Heart right ventricle (tissue), 16 donors: ENCODE measurements at regions of chr2 and their contacts with region 1.

Region 1: GRCh38 chr2:176454893-176455811 is 185.9 kb downstream of the MTX2 start:
- DNase-seq: peak; percentile 81 to 84
- ATAC-seq: peak in 7 of 8 donors; percentile 34 to 78 (median 55)
- H3K4me3 ChIP-seq: no peak overlapping the region
- H3K27ac ChIP-seq: peak overlapping the region in 6 of 10 donors; percentile 23 to 63 (median 45)
- H3K4me1 ChIP-seq: peaks cover 0 to 21% (median 3%) of the 10 kb centered on the region in 9 donors
- H3K27me3 ChIP-seq: peaks cover 0 to 64% (median 10%) of the 10 kb centered on the region in 7 donors
- CTCF ChIP-seq: peak; percentile 81 to 97 (median 93)

Region 2: DNA sequence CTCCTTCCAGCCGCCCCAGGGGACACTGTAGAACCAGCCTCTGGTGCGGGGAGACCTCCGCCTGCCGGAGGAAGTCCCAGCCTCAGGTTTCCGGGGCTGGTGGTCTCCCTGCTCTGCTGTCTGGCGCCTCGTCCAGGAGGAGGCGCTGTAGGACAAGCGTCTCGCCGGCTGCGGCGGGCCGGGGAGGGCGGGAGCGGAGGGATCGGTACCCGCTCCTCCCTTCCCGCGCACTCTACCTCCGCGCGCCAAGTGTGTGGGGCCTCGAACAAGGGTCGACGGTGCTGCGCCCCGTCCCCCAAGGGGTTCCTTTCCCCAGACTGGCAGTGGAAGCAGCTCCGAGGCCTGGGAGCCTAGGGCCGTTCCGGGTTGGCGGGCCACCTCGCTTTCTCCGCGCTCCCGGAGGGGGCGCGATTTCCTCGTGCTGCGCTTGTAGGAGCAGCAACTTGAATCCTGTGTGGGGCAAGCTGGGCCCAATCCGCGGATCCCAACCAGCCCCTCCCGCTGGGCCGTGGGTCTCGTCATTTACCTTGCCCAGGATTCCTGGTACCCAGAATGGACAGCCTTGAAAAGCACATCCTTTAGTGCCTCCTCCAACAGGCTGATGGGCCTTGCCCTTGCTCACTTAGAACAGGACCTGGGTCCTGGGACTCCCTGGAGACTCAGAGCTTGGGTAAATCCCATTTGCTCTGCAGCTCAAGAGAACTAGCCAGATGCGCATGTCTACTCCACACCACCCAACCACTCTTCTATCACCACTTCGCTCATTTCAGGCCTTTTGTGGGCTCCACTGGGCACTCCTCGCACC is 314.4 kb before region 1 on chr2:
- intact Hi-C with region 1: loop called (anchors 1 to 5 kb)
- DNase-seq: peak; percentile 49 to 69
- ATAC-seq: peak; percentile 91 to 96 (median 94)
- H3K4me3 ChIP-seq: peak overlapping the region; percentile 11 to 65 (median 46)
- H3K27ac ChIP-seq: peak overlapping the region in 3 of 10 donors; percentile 35 to 57 (median 56)
- H3K4me1 ChIP-seq: peaks cover 0 to 24% (median 18%) of the 10 kb centered on the region in 9 donors
- H3K27me3 ChIP-seq: peaks cover 22 to 100% (median 98%) of the 10 kb centered on the region in 7 donors
- CTCF ChIP-seq: peak; percentile 77 to 99 (median 93)

Region 3: DNA sequence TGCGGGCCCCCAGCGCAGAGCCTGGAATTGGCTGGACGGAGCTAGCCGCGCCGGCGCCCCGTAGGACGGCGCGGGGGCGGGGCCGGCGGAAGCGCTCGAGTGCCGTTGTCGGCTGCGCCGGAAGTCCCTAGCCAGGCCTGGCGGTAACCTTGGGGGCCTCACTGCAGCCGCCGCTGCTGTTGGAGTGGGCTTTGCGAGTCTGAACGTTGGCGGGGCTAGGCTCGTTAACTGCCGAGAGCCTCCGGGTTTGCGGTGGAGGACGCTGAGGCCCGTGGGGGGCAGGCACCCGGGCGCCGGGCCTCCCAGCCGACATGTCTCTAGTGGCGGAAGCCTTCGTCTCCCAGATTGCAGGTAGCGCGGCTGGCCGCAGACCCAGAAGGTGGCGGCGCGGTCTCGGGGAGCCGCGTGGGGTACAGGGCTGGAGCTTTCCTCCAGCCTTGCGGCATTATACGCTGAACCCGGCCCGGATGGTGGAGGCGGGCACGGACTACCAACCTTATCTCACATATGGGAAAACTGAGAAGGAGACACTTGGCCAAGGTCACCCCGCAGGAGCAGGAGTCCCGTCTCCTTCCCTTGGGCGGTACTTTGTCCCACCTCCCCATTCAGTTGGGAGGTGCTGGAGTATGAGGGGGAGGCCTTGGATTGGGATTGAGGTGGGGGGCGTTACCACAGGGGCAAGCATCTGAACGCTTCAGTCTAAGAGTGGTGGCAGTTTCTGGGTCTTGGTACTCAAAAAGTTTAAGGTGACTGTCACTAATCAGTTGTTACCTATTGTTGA is 185.6 kb before region 1 on chr2 and contains the start of gene MTX2:
- intact Hi-C with region 1: loop called in 1 of 10 experiments (anchors 10 kb)
- DNase-seq: peak; percentile 67 to 78
- ATAC-seq: peak; percentile 98 to 100 (median 99)
- H3K4me3 ChIP-seq: peak within 1 kb of the TSS; percentile 57 to 96 (median 78)
- H3K27ac ChIP-seq: peak within 1 kb of the TSS; percentile 66 to 96 (median 92)
- H3K4me1 ChIP-seq: peaks cover 0 to 37% (median 16%) of the 10 kb centered on the region in 9 donors
- H3K27me3 ChIP-seq: peaks cover 0 to 6% (median 0%) of the 10 kb centered on the region in 7 donors
- CTCF ChIP-seq: peak in 4 of 9 donors; percentile 6 to 39 (median 31)
- total RNA-seq, gene MTX2: 37.3 to 55.8 (median 46.8) TPM

Region 4: DNA sequence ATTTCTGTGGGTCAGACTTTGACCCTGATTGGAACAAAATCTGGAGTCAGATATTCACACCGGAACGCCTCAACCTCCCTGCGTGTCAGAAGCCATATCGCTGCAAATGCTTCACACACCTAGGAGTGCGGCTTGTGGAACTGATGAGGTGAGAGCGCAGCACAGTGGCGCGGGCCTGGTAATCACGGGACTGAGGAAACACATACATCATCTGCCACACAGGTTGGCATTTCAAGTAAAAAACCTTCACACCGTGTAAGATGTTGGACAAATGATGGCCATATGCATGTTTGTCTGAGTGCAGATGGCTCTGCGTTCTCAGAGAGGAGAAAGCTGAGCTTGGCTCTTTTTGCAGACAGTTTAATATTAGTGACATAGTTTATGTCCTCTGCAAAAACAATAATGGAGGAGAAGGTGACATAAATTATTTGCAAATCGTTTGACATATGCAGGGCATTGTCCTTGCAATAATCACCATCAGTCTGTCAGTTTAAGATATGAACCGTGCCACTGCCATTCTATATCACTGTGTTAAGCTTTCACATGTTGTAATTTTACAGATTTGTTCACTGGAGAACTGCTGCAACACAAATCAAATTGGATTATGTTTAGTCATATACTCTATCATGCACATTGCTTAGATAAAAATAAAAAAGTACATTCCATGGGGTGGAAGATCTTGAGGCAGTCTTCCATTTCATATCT is 84.5 kb before region 1 on chr2:
- intact Hi-C with region 1: no loop called
- DNase-seq: no peak
- ATAC-seq: no peak
- H3K4me3 ChIP-seq: no peak overlapping the region
- H3K27ac ChIP-seq: no peak overlapping the region
- H3K4me1 ChIP-seq: no peaks in the 10 kb centered on the region
- H3K27me3 ChIP-seq: peaks cover 0 to 5% (median 0%) of the 10 kb centered on the region in 7 donors
- CTCF ChIP-seq: no peak

Region 5: GRCh38 chr2:176491172-176491904 is 36.2 kb after region 1 on chr2:
- intact Hi-C with region 1: loop called in 1 of 10 experiments (anchors 2 kb)
- DNase-seq: peak; percentile 58
- ATAC-seq: peak; percentile 83 to 89 (median 86)
- H3K4me3 ChIP-seq: no peak overlapping the region
- H3K27ac ChIP-seq: peak overlapping the region; percentile 2 to 84 (median 75)
- H3K4me1 ChIP-seq: peaks cover 3 to 52% (median 25%) of the 10 kb centered on the region in 9 donors
- H3K27me3 ChIP-seq: peaks cover 0 to 38% (median 6%) of the 10 kb centered on the region in 7 donors
- CTCF ChIP-seq: no peak

Region 6: DNA sequence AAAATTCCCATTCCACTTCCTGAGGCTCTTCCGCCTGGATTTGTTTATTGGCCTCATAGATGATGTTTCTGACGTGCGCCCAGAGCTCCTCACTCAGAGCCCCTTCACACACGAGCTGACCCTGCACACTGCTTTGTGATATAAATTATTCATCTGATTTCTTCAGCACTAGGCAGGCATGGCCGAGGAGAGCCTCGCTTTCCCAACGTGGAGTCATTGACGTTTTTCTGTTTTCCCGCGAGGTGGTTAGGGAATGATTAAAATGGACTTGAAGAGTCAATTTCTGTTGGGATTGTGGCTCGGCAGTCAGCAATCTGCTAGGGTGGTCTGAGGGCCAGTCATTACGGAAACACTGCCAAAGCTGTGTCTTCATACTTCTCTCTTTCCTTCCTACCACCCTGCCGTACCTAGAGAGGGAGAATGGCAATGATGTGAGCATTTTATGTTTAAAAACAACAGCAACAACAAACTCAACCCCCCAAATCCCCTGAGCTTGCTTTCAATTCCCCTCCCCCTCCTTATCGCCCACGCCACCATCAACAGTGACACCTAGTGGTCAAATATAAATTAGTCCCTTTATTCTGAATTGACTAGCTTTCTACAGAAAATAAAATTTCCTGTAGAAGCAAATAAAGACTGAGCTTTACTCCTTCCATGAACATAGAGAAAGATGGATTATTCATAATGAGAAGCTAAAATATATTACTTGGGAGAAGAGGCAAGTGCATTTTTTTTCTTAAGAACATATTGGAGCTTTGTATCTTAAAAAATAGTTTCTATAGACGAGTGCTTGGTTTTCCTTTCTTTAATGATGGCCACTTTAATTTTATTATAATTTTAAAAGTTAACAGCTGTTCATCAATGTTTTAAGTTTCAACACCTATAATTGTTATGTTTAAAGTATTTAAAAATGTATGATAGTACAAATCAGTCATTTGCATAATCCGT is 99.2 kb after region 1 on chr2:
- intact Hi-C with region 1: loop called (anchors 1 to 10 kb)
- DNase-seq: peak; percentile 11 to 38
- ATAC-seq: peak; percentile 62 to 90 (median 76)
- H3K4me3 ChIP-seq: peak overlapping the region in 9 of 10 donors; percentile 32 to 59 (median 45)
- H3K27ac ChIP-seq: peak overlapping the region in 8 of 10 donors; percentile 15 to 64 (median 53)
- H3K4me1 ChIP-seq: peaks cover 0 to 22% (median 17%) of the 10 kb centered on the region in 9 donors
- H3K27me3 ChIP-seq: peaks cover 0 to 67% (median 35%) of the 10 kb centered on the region in 7 donors
- CTCF ChIP-seq: peak; percentile 66 to 86 (median 76)

Region 7: GRCh38 chr2:176638167-176639015 is 183.2 kb after region 1 on chr2:
- intact Hi-C with region 1: loop called (anchors 5 to 10 kb)
- DNase-seq: peak; percentile 47 to 70
- ATAC-seq: peak; percentile 55 to 94 (median 92)
- H3K4me3 ChIP-seq: peak overlapping the region; percentile 43 to 66 (median 62)
- H3K27ac ChIP-seq: peak overlapping the region in 3 of 10 donors; percentile 45 to 64 (median 58)
- H3K4me1 ChIP-seq: peaks cover 0 to 14% (median 7%) of the 10 kb centered on the region in 9 donors
- H3K27me3 ChIP-seq: peaks cover 5 to 97% (median 87%) of the 10 kb centered on the region in 7 donors
- CTCF ChIP-seq: peak; percentile 68 to 88 (median 77)